Colonic mucosa (tissue), 4 donors: ENCODE measurements at regions of chr22 and their contacts with region 1.

Region 1: DNA sequence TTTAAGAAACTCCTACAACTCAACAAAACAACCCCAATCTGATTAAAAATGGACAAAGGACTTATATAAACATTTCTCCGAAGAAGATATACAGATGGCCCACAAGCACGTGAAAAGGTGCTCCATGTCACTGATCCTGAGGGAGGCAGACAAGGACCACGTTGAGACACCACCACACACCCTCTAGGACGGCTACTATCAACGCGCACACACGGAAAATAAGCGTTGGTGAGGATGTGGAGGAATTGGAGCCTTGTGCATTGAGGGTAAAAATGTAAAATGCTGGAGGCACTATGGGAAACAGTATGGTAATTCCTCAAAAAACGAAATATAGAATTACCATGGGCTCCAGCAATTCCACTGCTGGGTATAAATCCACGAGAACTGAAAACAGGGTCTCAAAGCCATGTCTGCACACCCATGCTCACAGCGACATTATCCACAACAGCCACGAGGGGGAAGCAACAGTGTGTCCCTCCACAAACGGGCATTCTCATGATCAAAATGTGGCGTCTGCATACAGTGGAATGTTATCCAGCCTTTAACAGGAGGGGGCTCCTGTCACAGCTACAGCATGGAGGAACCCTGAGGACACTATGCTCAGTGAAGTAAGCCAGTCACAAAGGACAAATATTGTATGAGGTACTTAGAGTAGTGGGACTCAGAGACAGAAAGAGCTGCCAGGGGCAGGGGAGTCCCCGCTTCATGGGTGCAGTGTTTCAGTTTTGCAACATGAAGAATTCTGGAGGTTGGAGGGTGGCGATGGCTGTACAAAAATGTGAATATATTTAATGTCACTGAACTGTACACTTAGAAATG is 22.5 kb downstream of the YPEL1 start:
- DNase-seq: peak; percentile 57
- H3K4me3 ChIP-seq: no peak overlapping the region
- H3K27ac ChIP-seq: no peak overlapping the region
- H3K4me1 ChIP-seq: no peaks in the 10 kb centered on the region
- H3K27me3 ChIP-seq: no peaks in the 10 kb centered on the region
- CTCF ChIP-seq: peak; percentile 75

Region 2: GRCh38 chr22:21677606-21678443 is 35.3 kb before region 1 on chr22:
- intact Hi-C with region 1: no loop called
- DNase-seq: no peak
- H3K4me3 ChIP-seq: no peak overlapping the region
- H3K27ac ChIP-seq: no peak overlapping the region
- H3K4me1 ChIP-seq: no peaks in the 10 kb centered on the region
- H3K27me3 ChIP-seq: no peaks in the 10 kb centered on the region
- CTCF ChIP-seq: no peak

Region 3: GRCh38 chr22:21938071-21938822 is 225.1 kb after region 1 on chr22:
- intact Hi-C with region 1: loop called (anchors 5 kb)
- DNase-seq: peak; percentile 96
- H3K4me3 ChIP-seq: peak overlapping the region; percentile 80
- H3K27ac ChIP-seq: peak overlapping the region; percentile 95
- H3K4me1 ChIP-seq: peaks cover 18% of the 10 kb centered on the region
- H3K27me3 ChIP-seq: no peaks in the 10 kb centered on the region
- CTCF ChIP-seq: peak; percentile 97

Region 4: DNA sequence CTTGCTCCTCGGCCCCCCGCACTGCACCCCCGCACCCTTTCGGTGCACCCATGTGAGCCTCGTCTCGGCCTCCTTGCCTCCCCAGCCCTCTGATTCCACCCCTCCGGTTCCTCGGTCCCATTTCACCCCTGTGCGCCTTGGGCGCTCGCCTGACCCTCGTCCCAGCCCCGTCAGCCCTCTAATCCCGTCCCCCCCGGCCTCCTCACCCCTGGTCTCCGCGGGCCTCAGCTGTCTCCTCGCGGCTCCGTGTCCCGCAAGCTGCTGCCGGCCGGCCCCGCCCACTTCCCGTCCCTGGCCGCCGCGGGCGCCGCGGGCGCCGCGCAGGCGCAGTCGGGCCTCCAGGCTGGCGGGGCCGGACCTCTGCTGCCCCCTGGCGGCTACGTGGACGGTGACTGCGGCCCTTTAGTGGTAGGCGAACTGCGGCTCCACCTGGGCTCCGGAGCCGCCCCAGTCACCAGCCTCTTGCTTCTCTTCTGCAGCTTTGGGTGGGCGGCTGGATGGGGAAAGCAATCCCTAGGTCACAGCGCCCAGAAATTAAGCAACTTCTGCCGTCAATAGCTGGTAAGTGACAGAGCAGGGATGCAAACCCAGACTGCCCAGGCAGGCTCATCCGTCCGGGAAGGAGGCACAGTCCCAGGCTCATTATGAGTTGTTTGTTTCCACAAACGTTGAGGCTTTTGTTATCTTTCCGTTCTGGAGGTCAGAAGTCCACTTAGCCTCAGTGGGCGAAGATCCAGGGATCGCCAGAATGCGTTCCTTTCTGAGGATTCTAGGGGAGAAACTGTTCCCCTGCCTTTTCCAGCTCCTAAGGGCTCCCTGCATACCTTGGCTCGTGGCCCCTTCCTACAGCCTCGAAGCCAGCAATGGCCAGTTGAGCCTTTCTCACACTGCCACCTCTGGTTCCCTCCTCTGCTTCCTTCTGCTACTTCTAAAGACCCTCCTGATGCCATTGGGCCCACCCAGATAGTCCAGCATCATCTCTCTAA is 239.8 kb after region 1 on chr22 and contains the start of gene PPM1F:
- intact Hi-C with region 1: loop called (anchors 5 kb)
- DNase-seq: peak; percentile 84
- H3K4me3 ChIP-seq: peak within 1 kb of the TSS; percentile 61
- H3K27ac ChIP-seq: no peak within 1 kb of the TSS
- H3K4me1 ChIP-seq: peaks cover 7% of the 10 kb centered on the region
- H3K27me3 ChIP-seq: no peaks in the 10 kb centered on the region
- CTCF ChIP-seq: peak; percentile 77
- total RNA-seq, gene PPM1F: 9.5 to 15.3 TPM

Region 5: DNA sequence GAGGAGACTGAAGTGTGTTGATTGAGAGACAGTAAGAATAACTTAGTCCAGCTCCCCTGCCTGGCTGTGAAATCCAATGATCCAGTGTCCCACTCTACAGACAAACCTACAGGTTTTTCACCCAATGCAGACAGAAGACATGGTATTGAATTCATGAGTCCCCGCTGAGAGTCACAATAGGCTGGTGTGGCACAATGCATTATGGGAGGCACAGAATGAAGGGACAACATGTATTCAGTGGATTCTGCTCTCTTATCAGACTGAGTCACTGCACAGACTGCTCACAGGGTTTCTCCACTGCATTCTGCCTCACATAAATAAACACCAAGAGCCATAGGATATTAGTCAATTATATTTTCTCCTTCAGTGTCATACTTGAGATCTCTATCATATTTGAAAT is 324.6 kb after region 1 on chr22:
- intact Hi-C with region 1: no loop called
- DNase-seq: no peak
- H3K4me3 ChIP-seq: no peak overlapping the region
- H3K27ac ChIP-seq: no peak overlapping the region
- H3K4me1 ChIP-seq: no peaks in the 10 kb centered on the region
- H3K27me3 ChIP-seq: no peaks in the 10 kb centered on the region
- CTCF ChIP-seq: no peak